BJ (cell line): ENCODE measurements at regions of chr5 and their contacts with region 1.

Region 1: DNA sequence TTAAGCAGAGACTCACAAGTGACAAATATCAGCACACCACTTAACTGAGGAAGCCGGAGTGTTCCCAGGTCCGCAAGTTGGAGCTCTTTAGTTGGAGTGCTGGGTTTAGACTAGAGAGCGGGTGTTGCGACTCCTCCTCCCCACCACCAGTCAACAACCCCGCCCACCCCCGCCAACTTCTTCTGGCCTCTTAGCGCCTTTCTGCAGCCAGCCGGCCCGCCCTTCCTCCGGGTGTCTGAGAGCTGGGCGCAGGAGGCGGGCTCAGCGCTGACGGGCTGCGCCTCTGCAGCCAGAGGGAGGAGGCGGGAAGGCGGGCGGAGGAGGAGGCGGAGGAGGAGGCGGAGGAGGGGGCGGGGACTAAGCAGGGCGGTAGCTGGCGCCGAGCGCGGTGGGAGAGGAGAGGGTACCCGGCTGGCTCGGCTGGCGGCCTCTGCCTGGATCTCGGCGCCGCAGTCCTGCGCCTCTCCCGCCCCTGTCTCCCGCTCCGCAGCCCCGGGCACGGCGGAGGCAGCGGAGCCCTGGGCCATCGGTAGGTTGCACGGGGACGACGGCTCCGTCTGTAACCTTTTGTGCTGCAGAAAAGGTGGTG is at the start of gene MACIR:
- DNase-seq: peak; percentile 89
- H3K4me3 ChIP-seq: peak within 1 kb of the TSS; percentile 67
- H3K27me3 ChIP-seq: no peaks in the 10 kb centered on the region
- CTCF ChIP-seq: 0 out of 2 replicates have a peak, but pooled peaks have one; percentile 18
- polyA plus RNA-seq, gene MACIR: 29.1 and 35.1 TPM in 2 replicates

Region 2: DNA sequence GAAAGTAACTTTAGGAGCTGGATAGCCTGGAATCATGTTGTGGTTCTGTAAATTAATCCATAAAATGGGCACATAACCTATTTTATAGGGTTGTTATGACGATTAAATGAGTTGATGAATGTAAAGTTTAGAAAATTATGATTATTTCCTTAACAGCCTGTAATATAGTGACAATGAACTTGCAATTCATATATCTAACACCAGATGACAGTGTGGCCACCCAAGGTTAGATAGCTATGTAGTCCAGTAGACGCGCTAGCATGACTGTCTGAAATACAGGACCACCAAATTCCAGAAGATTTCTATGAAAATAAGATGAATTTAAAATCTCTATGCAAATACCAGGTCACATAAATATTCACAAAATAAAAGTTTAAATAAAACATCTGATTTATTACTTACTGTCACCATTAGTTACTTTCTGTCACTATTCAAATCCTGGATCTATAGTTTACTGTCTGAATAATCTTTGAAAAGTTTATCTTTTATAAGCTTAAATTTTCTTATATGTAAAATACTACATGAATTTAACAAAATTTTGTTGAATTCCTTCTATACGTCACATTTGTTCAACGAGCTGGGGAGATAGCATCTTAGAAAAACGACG is 26.0 kb before region 1 on chr5:
- CTCF ChIA-PET with region 1: interaction called, 9 read pairs
- POLR2A ChIA-PET with region 1: interaction called, 13 read pairs
- DNase-seq: no peak
- H3K4me3 ChIP-seq: no peak overlapping the region
- H3K27me3 ChIP-seq: no peaks in the 10 kb centered on the region
- CTCF ChIP-seq: peak; percentile 76

Region 3: DNA sequence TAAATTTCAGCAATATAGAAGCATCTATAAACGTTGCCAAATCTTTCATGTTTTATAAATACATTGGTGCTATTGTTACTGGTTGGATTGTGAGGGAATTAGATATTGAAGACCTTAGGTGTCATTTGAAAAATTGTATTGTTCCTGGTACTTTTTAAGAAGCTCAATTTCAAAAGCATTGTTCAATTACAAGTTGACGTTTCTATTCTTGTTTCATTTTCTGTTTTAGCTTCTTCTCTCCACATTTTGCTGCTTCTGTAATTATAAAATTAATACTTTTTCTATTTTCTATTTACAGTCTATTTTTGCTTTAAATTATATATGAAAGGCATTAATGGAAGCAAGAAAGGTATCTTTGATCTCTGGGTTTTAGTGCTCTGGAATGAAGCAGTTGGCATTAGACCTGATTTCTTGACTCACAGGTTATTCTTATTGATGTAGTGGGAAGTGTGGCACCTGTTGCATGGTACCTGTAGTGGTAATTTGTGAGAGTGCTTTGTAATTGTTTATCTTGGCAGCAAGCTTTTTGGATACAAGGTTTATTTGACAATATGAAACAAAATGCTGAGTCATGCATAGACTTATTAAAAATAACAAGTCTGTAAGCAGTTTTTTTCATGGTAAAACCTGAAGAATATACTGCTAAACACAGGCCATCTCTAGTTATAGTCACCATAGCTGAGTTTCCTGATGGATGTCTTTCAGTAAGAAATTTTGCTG is 13.3 kb after region 1 on chr5:
- CTCF ChIA-PET with region 1: interaction called, 4 read pairs
- POLR2A ChIA-PET with region 1: interaction called, 17 read pairs
- DNase-seq: no peak
- H3K4me3 ChIP-seq: no peak overlapping the region
- H3K27me3 ChIP-seq: no peaks in the 10 kb centered on the region
- CTCF ChIP-seq: no peak

Region 4: DNA sequence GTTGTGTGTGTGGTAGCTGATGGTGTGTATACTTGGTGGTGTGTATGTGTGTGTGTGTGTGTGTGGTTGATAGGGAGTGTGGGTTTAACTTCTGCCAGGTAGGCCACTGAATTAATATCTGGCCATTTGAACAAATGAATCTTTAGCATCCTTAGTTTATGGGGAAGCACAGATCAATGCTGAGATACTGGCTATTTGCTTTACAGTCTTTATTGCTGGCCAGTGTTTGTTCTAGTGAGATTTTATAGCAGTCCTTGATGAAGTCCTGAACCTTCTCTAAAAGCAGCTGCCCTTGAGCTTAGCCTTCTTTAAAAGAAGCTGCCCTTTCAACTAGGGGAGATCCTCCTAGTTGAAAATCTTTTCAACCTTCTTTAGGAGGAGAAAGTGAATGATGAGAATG is 69.4 kb after region 1 on chr5:
- CTCF ChIA-PET with region 1: no interaction called
- POLR2A ChIA-PET with region 1: no interaction called
- DNase-seq: no peak
- H3K4me3 ChIP-seq: no peak overlapping the region
- H3K27me3 ChIP-seq: no peaks in the 10 kb centered on the region
- CTCF ChIP-seq: no peak

Region 5: GRCh38 chr5:103362211-103362610 is 103.7 kb after region 1 on chr5:
- CTCF ChIA-PET with region 1: no interaction called
- POLR2A ChIA-PET with region 1: interaction called, 15 read pairs
- DNase-seq: no peak
- H3K4me3 ChIP-seq: no peak overlapping the region
- H3K27me3 ChIP-seq: no peaks in the 10 kb centered on the region
- CTCF ChIP-seq: no peak

Region 6: DNA sequence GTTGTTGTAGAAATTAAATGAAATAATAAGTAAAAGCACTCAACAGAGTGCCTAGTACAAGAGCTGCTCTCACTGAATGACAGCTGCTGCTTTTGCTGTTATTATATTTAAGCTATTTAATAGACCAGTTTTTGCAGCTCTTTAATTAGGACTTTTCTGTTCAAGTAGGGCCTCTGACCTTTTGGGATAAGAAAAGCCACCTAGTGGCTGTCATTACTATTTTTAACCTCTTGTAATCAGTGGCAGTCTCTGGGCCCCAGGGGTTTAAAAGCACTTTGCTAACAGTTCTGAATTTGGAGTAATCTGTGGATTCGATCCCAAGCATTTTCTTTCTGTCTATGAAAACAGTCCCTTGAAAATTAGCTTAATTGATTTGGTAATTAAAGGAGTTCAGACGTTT is 183.1 kb after region 1 on chr5:
- CTCF ChIA-PET with region 1: no interaction called
- POLR2A ChIA-PET with region 1: interaction called, 12 read pairs
- DNase-seq: no peak
- H3K4me3 ChIP-seq: no peak overlapping the region
- H3K27me3 ChIP-seq: no peaks in the 10 kb centered on the region
- CTCF ChIP-seq: peak; percentile 8; the same call in 1 of the 2 replicates

Region 7: GRCh38 chr5:103546858-103547257 is 288.4 kb after region 1 on chr5:
- CTCF ChIA-PET with region 1: no interaction called
- POLR2A ChIA-PET with region 1: no interaction called
- DNase-seq: no peak
- H3K4me3 ChIP-seq: no peak overlapping the region
- H3K27me3 ChIP-seq: no peaks in the 10 kb centered on the region
- CTCF ChIP-seq: no peak